Activated T-helper 2 cell treated with anti-CD3 and anti-CD28 coated beads, Interferon-gamma antibody, Interleukin-2, Interleukin-4, amounts not matched to agents 10 μg/mL and 5 μg/mL and 100 μg/mL, durations not matched to agents 14 hours and 24 hours and 36 hours (primary cell): ENCODE measurements at regions of chrX and their contacts with region 1.

Region 1: GRCh38 chrX:57286507-57287251 is at the start of gene FAAH2:
- DNase-seq: peak; percentile 20
- H3K4me3 Mint-ChIP-seq: peak within 1 kb of the TSS; percentile 83
- H3K27ac Mint-ChIP-seq: peak within 1 kb of the TSS; percentile 82
- H3K4me1 Mint-ChIP-seq: peaks cover 39% of the 10 kb centered on the region
- H3K27me3 Mint-ChIP-seq: no peaks in the 10 kb centered on the region
- total RNA-seq, gene FAAH2: 2.7 and 2.9 TPM in 2 replicates

Region 2: DNA sequence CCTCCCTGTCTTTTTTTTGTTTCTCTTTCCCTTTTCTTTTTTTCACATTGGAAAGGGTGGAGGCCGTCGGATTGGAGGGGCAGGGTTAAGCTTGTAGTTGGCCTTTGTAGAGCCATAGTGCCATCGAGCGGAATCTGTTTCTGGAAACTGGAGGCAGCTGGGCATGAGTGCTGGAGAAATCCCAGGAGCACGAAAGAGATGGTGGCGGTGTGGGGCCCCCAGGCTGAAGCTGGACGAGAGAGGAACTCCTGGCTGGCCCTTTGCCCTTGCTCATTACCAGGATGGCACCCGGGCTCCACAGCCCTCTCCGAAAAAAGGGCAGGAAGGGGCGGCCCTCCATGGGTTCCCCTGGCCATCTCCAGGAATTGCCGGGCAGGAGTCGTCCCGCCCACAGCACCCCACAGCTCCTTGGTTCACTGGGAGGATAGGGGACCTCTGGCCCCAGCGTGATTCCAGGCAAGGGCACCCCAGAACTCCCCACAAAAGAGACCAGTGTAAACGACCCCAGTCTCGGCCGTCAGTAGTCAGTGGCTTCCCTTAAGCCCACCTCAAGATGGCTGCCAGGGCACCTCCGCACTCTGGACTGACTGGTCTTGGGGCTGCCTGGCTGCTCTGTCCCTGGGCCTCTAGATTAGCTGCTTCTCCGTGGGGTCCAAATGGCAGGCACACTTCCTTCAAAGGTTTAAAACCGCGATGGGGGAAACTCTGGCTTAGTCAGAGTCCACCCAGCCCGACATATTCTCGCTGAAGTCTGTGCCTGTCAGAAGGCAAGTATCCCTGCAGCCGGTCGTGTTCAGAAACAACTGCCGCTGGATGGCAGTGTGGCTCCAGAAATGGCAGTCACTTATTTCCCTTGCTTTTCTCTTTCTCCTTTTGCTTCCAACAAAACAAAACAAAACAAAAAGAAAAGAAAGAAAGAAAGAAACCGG is 483.5 kb before region 1 on chrX:
- intact Hi-C with region 1: loop called (anchors 1 kb)
- DNase-seq: peak; percentile 35
- H3K4me3 Mint-ChIP-seq: peak overlapping the region; percentile 64
- H3K27ac Mint-ChIP-seq: no peak overlapping the region
- H3K4me1 Mint-ChIP-seq: peaks cover 32% of the 10 kb centered on the region
- H3K27me3 Mint-ChIP-seq: no peaks in the 10 kb centered on the region

Region 3: DNA sequence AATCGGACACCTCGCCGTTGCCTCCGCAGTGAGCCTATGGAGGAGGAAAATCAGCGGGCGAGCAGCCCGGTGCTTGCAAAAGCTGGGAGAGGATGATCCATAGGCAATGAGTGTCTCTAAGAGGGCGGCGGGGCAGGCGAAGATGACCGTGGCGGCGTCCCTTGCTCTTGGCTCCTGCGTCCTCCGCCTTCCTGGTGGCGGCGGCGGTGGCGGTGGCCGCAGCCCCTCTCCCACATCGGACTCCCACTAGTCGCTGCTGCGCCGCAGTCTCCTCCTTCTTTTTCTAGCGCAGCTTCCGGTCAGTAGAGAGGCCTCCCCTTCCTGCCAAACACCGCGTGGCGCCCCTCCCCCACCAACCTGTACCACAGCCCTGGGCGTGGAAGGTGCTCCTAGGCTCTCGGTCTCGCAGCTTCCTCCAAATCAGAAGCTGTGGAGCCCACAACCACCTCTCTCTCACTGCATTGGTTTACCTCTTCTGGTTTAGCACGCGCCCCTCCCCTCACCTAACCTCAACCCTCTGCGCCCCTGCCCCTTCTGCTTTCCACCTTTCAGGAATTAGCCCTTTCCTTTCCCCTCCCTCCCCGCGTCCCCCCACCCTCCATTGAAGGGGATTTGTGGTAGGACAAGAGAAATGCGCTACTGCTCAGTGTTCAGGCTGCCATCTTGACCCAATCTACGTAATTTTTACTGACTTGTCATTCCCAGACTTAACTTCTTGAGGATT is 291.2 kb before region 1 on chrX and contains the start of gene SPIN3:
- intact Hi-C with region 1: loop called (anchors 10 kb)
- DNase-seq: peak; percentile 40
- H3K4me3 Mint-ChIP-seq: peak within 1 kb of the TSS; percentile 88
- H3K27ac Mint-ChIP-seq: peak within 1 kb of the TSS; percentile 84
- H3K4me1 Mint-ChIP-seq: peaks cover 30% of the 10 kb centered on the region
- H3K27me3 Mint-ChIP-seq: no peaks in the 10 kb centered on the region
- total RNA-seq, gene SPIN3: 10.0 and 11.5 TPM in 2 replicates

Region 4: GRCh38 chrX:57353472-57354132 is 66.9 kb after region 1 on chrX:
- intact Hi-C with region 1: no loop called
- DNase-seq: no peak
- H3K4me3 Mint-ChIP-seq: no peak overlapping the region
- H3K27ac Mint-ChIP-seq: no peak overlapping the region
- H3K4me1 Mint-ChIP-seq: peaks cover 2% of the 10 kb centered on the region
- H3K27me3 Mint-ChIP-seq: no peaks in the 10 kb centered on the region

Region 5: GRCh38 chrX:57380026-57380796 is 93.5 kb after region 1 on chrX:
- intact Hi-C with region 1: loop called (anchors 1 kb)
- DNase-seq: no peak
- H3K4me3 Mint-ChIP-seq: no peak overlapping the region
- H3K27ac Mint-ChIP-seq: peak overlapping the region; percentile 81
- H3K4me1 Mint-ChIP-seq: peaks cover 15% of the 10 kb centered on the region
- H3K27me3 Mint-ChIP-seq: no peaks in the 10 kb centered on the region

Region 6: DNA sequence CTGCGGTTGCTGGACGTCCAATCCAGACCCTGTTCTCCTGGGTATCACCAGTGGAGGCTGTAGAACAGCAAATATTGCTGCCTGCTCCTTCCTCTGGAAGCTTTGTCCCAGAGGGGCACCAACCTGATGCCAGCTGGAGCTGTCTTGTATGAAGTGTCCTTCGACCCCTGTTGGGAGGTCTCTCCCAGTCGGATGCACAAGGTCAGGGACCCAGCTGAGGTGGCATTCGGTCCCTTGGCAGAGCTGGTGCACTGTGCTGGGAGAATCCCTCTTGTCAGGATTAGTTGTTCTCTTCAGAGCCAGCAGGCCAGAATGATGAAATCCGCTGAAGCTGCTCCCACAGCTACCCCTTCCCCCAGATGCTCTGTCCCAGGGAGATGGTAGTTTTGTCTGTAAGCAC is 194.8 kb after region 1 on chrX:
- intact Hi-C with region 1: no loop called
- DNase-seq: no peak
- H3K4me3 Mint-ChIP-seq: no peak overlapping the region
- H3K27ac Mint-ChIP-seq: no peak overlapping the region
- H3K4me1 Mint-ChIP-seq: no peaks in the 10 kb centered on the region
- H3K27me3 Mint-ChIP-seq: no peaks in the 10 kb centered on the region

Region 7: DNA sequence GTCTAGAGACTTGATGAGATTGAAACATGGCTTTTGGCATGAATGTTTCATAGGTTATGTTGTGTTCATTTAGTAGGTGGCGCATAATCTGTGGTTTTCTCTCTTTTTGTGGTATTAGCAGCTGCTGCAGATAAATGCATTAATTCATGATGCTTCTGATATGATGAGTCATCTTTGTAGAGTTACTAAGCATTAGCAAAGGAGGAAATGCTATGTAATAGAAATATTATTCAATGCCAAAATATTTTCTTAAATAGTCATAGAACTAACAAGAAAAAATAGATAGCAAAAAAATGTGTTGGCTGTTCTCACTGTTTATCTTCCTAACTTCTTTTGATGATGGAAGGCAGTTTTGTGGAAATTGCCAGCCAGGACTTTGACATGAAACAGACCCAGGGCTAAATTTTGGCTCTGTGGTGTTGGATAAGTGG is 308.7 kb after region 1 on chrX:
- intact Hi-C with region 1: loop called (anchors 5 kb)
- DNase-seq: no peak
- H3K4me3 Mint-ChIP-seq: peak overlapping the region; percentile 74
- H3K27ac Mint-ChIP-seq: peak overlapping the region; percentile 63
- H3K4me1 Mint-ChIP-seq: peaks cover 24% of the 10 kb centered on the region
- H3K27me3 Mint-ChIP-seq: no peaks in the 10 kb centered on the region